Astrocyte of the cerebellum (primary cell): ENCODE measurements at regions of chr14 and their contacts with region 1.

Region 1: GRCh38 chr14:49106741-49107667 is 479.2 kb downstream of the RPS29 start:
- DNase-seq: no peak
- H3K4me3 ChIP-seq: no peak overlapping the region
- CTCF ChIP-seq: no peak

Region 2: DNA sequence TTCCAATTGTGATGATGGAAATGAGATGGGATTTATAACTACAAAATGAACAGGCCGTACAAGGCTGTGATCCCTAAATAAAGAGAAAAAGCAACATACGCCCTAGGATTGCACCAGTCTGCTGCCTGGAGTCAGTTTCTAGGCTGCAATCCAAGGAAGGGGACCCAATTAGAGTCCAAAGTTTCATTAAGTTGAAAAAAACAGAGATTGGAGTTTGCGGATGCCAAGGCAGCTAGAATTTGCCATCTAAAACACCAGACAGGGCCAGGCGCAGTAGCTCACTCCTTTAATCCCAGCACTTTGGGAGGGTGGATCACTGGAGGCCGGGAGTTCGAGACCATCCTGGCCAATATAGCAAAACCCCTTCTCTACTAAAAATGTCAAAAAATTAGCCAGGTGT is 181.8 kb before region 1 on chr14:
- in situ Hi-C with region 1: no loop called
- DNase-seq: no peak
- H3K4me3 ChIP-seq: no peak overlapping the region
- CTCF ChIP-seq: no peak

Region 3: GRCh38 chr14:49056021-49056420 is 51.0 kb before region 1 on chr14:
- in situ Hi-C with region 1: no loop called
- DNase-seq: peak; percentile 1
- H3K4me3 ChIP-seq: no peak overlapping the region
- CTCF ChIP-seq: no peak

Region 4: DNA sequence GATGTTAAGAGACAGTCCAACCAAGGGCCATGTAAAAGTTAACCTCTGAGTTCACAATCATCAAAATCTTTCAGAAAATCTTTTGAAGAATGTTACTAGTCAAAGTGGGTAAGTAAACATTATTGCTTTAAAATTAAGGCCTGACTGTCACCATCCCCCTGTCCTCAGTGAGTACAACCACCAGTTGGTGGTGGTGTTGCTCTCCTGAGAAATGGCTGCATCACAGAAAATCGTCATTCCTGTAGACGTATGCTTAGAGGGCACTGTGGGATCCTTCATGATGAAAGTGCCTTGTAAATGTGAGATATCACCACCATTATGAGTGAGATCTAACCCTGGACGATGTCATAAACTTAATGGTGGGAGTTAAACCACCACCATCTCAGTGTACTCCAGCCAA is 27.9 kb after region 1 on chr14:
- in situ Hi-C with region 1: loop called (anchors 5 kb)
- DNase-seq: no peak
- H3K4me3 ChIP-seq: no peak overlapping the region
- CTCF ChIP-seq: no peak